ENCODE measurements at regions of chr2 and their contacts with region 1.

Region 1: GRCh38 chr2:24084386-24085361 is at the start of gene TP53I3:
- DNase-seq: peak; percentile 64 to 90 (median 80)
- ATAC-seq: peak; percentile 88
- H3K4me3 ChIP-seq: peak within 1 kb of the TSS; percentile 54 to 87
- H3K4me3 Mint-ChIP-seq: peak within 1 kb of the TSS; percentile 88
- H3K27ac ChIP-seq: peak within 1 kb of the TSS in 1 of 2 experiments; percentile 12
- H3K27ac Mint-ChIP-seq: peak within 1 kb of the TSS; percentile 79
- H3K4me1 ChIP-seq: peaks cover 13% of the 10 kb centered on the region
- H3K4me1 Mint-ChIP-seq: peaks cover 14% of the 10 kb centered on the region
- H3K27me3 ChIP-seq: no peaks in the 10 kb centered on the region
- H3K27me3 Mint-ChIP-seq: no peaks in the 10 kb centered on the region
- CTCF ChIP-seq: peak; percentile 82
- total RNA-seq, gene TP53I3: 0.17 TPM in 1 of 2 experiments, not detected in the other

Region 2: GRCh38 chr2:23460228-23460627 is 624.4 kb before region 1 on chr2:
- CTCF ChIA-PET with region 1: no interaction called
- POLR2A ChIA-PET with region 1: no interaction called
- intact Hi-C with region 1: no loop called
- DNase-seq: no peak
- ATAC-seq: no peak
- H3K4me3 ChIP-seq: no peak overlapping the region
- H3K4me3 Mint-ChIP-seq: no peak overlapping the region
- H3K27ac ChIP-seq: no peak overlapping the region
- H3K27ac Mint-ChIP-seq: no peak overlapping the region
- H3K4me1 ChIP-seq: no peaks in the 10 kb centered on the region
- H3K4me1 Mint-ChIP-seq: peaks cover 1% of the 10 kb centered on the region
- H3K27me3 ChIP-seq: peaks cover 0 to 3% of the 10 kb centered on the region in 2 experiments
- H3K27me3 Mint-ChIP-seq: peaks cover 21% of the 10 kb centered on the region
- CTCF ChIP-seq: no peak

Region 3: GRCh38 chr2:23803965-23804542 is 280.6 kb before region 1 on chr2:
- CTCF ChIA-PET with region 1: no interaction called
- POLR2A ChIA-PET with region 1: no interaction called
- intact Hi-C with region 1: no loop called
- DNase-seq: peak in 2 of 9 experiments; percentile 4 to 15
- ATAC-seq: no peak
- H3K4me3 ChIP-seq: no peak overlapping the region
- H3K4me3 Mint-ChIP-seq: no peak overlapping the region
- H3K27ac ChIP-seq: no peak overlapping the region
- H3K27ac Mint-ChIP-seq: no peak overlapping the region
- H3K4me1 ChIP-seq: no peaks in the 10 kb centered on the region
- H3K4me1 Mint-ChIP-seq: no peaks in the 10 kb centered on the region
- H3K27me3 ChIP-seq: no peaks in the 10 kb centered on the region
- H3K27me3 Mint-ChIP-seq: no peaks in the 10 kb centered on the region
- CTCF ChIP-seq: no peak

Region 4: GRCh38 chr2:23988371-23988770 is 96.3 kb before region 1 on chr2:
- CTCF ChIA-PET with region 1: interaction called, 5 read pairs
- POLR2A ChIA-PET with region 1: no interaction called
- intact Hi-C with region 1: loop called (anchors 1 kb)
- DNase-seq: peak in 2 of 9 experiments; percentile 30 to 49
- ATAC-seq: no peak
- H3K4me3 ChIP-seq: no peak overlapping the region
- H3K4me3 Mint-ChIP-seq: no peak overlapping the region
- H3K27ac ChIP-seq: no peak overlapping the region
- H3K27ac Mint-ChIP-seq: no peak overlapping the region
- H3K4me1 ChIP-seq: no peaks in the 10 kb centered on the region
- H3K4me1 Mint-ChIP-seq: no peaks in the 10 kb centered on the region
- H3K27me3 ChIP-seq: no peaks in the 10 kb centered on the region
- H3K27me3 Mint-ChIP-seq: no peaks in the 10 kb centered on the region
- CTCF ChIP-seq: peak; percentile 36

Region 5: DNA sequence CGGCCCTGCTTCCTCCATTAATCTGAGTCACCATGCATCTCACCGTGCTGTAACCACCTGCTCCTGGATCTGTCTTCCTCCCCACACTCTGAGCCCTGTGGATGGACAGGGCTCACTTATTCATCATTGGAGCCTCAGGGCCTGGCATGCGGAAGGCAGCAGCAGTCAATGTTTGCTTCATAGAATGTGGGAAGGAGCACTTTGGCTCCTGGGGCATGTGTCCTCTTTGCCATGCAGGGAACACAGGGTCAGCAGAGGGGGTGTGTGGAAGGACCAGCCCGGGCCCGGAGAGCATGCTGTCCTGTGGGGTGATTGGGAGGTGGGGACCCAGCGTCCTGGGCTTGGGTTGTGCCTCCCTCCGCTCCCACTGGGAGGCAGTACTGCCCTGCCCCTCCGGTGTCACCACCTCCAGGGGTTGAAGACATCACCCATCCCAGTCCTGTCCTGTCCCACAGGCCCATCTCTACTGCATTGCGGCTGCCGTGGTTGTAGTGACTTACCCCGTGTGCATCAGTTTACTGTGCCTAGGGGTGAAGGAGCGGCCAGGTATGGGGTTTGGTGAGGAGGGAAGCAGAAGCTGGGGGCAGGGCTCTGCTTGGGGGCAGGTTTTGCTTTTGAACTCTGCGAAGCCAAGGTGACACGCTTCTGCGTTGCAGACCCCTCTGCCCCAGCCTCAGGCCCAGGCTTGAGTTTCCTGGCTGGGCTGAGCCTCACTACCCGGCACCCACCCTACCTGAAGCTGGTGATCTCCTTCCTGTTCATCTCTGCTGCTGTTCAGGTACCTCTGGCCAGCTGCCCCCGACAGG is 63.3 kb before region 1 on chr2:
- CTCF ChIA-PET with region 1: interaction called, 3 read pairs
- POLR2A ChIA-PET with region 1: no interaction called
- intact Hi-C with region 1: loop called in 1 of 2 experiments (anchors 2 kb)
- DNase-seq: peak in 2 of 9 experiments; percentile 23 to 27
- ATAC-seq: peak; percentile 44
- H3K4me3 ChIP-seq: no peak overlapping the region
- H3K4me3 Mint-ChIP-seq: no peak overlapping the region
- H3K27ac ChIP-seq: no peak overlapping the region
- H3K27ac Mint-ChIP-seq: no peak overlapping the region
- H3K4me1 ChIP-seq: no peaks in the 10 kb centered on the region
- H3K4me1 Mint-ChIP-seq: no peaks in the 10 kb centered on the region
- H3K27me3 ChIP-seq: no peaks in the 10 kb centered on the region
- H3K27me3 Mint-ChIP-seq: no peaks in the 10 kb centered on the region
- CTCF ChIP-seq: no peak

Region 6: GRCh38 chr2:24046930-24047702 is 37.6 kb before region 1 on chr2 and contains the start of gene WDCP:
- CTCF ChIA-PET with region 1: interaction called, 10 read pairs
- POLR2A ChIA-PET with region 1: interaction called, 7 read pairs
- intact Hi-C with region 1: no loop called
- DNase-seq: peak; percentile 81 to 98 (median 92)
- ATAC-seq: peak; percentile 98
- H3K4me3 ChIP-seq: peak within 1 kb of the TSS; percentile 80 to 87
- H3K4me3 Mint-ChIP-seq: peak within 1 kb of the TSS; percentile 93
- H3K27ac ChIP-seq: peak within 1 kb of the TSS; percentile 54 to 56
- H3K27ac Mint-ChIP-seq: peak within 1 kb of the TSS; percentile 90
- H3K4me1 ChIP-seq: peaks cover 21% of the 10 kb centered on the region
- H3K4me1 Mint-ChIP-seq: peaks cover 35% of the 10 kb centered on the region
- H3K27me3 ChIP-seq: no peaks in the 10 kb centered on the region
- H3K27me3 Mint-ChIP-seq: peaks cover 2% of the 10 kb centered on the region
- CTCF ChIP-seq: no peak
- total RNA-seq, gene WDCP: 3.7 to 4.8 TPM

Region 7: GRCh38 chr2:24123195-24123921 is 38.7 kb after region 1 on chr2 and contains the starts of genes FAM228B and PFN4:
- CTCF ChIA-PET with region 1: interaction called, 6 read pairs
- POLR2A ChIA-PET with region 1: interaction called, 3 read pairs
- intact Hi-C with region 1: loop called in 1 of 2 experiments (anchors 5 kb)
- DNase-seq: peak in 8 of 9 experiments; percentile 41 to 76 (median 64)
- ATAC-seq: peak; percentile 84
- H3K4me3 ChIP-seq: peak within 1 kb of the TSS; percentile 51 to 57
- H3K4me3 Mint-ChIP-seq: peak within 1 kb of the TSS; percentile 82
- H3K27ac ChIP-seq: peak within 1 kb of the TSS; percentile 28 to 46
- H3K27ac Mint-ChIP-seq: peak within 1 kb of the TSS; percentile 85
- H3K4me1 ChIP-seq: peaks cover 14% of the 10 kb centered on the region
- H3K4me1 Mint-ChIP-seq: peaks cover 14% of the 10 kb centered on the region
- H3K27me3 ChIP-seq: no peaks in the 10 kb centered on the region
- H3K27me3 Mint-ChIP-seq: no peaks in the 10 kb centered on the region
- CTCF ChIP-seq: no peak
- total RNA-seq, gene FAM228B: 16.9 to 17.6 TPM
- total RNA-seq, gene PFN4: not detected

Region 8: GRCh38 chr2:24708537-24709152 is 624.0 kb after region 1 on chr2:
- CTCF ChIA-PET with region 1: no interaction called
- POLR2A ChIA-PET with region 1: no interaction called
- intact Hi-C with region 1: no loop called
- DNase-seq: no peak
- ATAC-seq: no peak
- H3K4me3 ChIP-seq: no peak overlapping the region
- H3K4me3 Mint-ChIP-seq: no peak overlapping the region
- H3K27ac ChIP-seq: no peak overlapping the region
- H3K27ac Mint-ChIP-seq: peak overlapping the region; percentile 12
- H3K4me1 ChIP-seq: no peaks in the 10 kb centered on the region
- H3K4me1 Mint-ChIP-seq: no peaks in the 10 kb centered on the region
- H3K27me3 ChIP-seq: no peaks in the 10 kb centered on the region
- H3K27me3 Mint-ChIP-seq: no peaks in the 10 kb centered on the region
- CTCF ChIP-seq: no peak

Measured in CD8-positive, alpha-beta T cell (primary cell).